ENCODE measurements at regions of chr2 and their contacts with region 1.

Region 1: DNA sequence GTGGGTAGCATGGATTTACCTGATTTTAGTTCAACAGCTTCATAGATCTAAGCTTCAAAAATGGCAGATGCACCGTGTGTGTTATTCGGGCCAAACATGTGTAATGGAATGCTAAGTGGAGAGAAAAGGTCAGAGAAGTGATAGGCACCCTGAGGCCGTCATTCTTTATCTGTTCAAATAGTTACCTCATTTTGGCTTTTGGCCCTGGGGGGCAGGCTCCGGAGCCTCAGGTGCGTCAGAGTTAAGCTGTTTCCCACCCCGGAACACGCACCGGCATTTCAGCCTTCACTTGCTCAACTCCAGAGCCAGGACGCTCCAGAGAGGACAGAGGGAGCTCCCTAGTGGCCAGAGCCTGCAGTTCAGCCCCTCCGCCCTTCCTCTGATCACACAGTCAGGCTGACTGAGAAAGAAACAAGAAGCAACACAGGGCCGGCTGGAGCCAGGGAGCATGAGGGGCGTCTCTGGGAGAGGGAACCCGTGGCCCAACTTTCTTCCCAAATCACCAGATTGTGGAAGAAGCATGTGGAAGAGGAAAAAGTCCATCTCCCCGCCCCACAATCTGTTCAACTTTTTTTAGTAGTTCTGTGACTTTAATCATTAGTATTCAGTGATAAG is 135.2 kb upstream of the EPC2 start:
- DNase-seq: peak; percentile 82 to 91 (median 91)
- ATAC-seq: peak; percentile 99 to 100
- H3K4me3 ChIP-seq: peak overlapping the region; percentile 3
- H3K27ac ChIP-seq: no peak overlapping the region
- H3K4me1 ChIP-seq: no peaks in the 10 kb centered on the region
- H3K27me3 ChIP-seq: no peaks in the 10 kb centered on the region

Region 2: DNA sequence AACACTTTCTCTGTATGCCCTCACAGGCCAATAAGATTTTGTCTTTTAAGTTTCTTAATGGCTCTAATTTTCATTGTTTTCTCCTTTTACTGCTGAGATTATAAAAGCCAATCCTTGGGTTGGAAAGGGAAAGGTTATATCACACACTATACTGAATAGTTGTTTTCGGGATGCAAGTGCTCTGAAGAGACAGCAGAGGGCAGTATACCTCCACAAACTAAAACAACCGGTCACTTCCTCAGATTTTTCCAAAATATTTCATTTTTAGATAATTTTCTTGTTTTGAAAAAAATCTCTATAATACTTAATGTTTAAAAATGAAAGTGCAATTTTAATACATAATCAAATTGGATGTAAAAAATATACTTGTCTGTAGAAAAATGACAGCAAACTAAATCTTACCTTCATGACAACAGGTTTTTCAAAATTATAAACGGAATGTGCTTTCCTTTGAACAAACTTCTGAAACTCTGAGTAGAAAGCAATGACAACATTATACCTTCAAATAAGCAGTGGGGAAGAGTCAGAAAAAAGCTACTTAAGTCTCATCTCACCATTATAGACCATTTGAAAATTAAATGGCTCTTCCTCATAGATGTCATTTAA is 571.5 kb before region 1 on chr2:
- intact Hi-C with region 1: loop called in 2 of 4 experiments (anchors 10 kb)
- DNase-seq: no peak
- ATAC-seq: peak; percentile 45 to 56
- H3K4me3 ChIP-seq: no peak overlapping the region
- H3K27ac ChIP-seq: no peak overlapping the region
- H3K4me1 ChIP-seq: no peaks in the 10 kb centered on the region
- H3K27me3 ChIP-seq: no peaks in the 10 kb centered on the region

Region 3: DNA sequence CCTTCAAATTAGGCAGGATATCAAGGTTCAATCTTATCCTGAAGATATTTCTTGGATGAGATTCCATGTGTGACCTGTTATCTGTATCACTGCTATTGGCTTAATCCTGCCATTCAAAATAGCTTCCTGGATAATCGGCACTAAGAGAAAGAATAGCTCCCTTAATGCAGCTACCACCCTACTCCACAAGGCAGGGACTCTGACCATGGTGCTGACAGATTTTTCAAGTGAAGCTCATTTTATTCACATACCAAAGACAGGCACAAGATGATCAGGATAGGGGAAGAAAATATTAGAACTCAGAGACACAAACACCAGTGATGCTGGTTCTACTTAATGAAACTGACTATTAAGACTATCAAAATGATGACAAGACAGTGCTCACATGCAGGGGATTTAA is 563.7 kb before region 1 on chr2:
- intact Hi-C with region 1: loop called in 1 of 4 experiments (anchors 10 kb)
- DNase-seq: no peak
- ATAC-seq: no peak
- H3K4me3 ChIP-seq: no peak overlapping the region
- H3K27ac ChIP-seq: no peak overlapping the region
- H3K4me1 ChIP-seq: no peaks in the 10 kb centered on the region
- H3K27me3 ChIP-seq: no peaks in the 10 kb centered on the region

Region 4: GRCh38 chr2:148330087-148330486 is 179.3 kb before region 1 on chr2:
- intact Hi-C with region 1: no loop called
- DNase-seq: no peak
- ATAC-seq: no peak
- H3K4me3 ChIP-seq: no peak overlapping the region
- H3K27ac ChIP-seq: no peak overlapping the region
- H3K4me1 ChIP-seq: no peaks in the 10 kb centered on the region
- H3K27me3 ChIP-seq: no peaks in the 10 kb centered on the region